Common myeloid progenitor, CD34-positive (primary cell): ENCODE measurements at regions of chr1 and their contacts with region 1.

Region 1: DNA sequence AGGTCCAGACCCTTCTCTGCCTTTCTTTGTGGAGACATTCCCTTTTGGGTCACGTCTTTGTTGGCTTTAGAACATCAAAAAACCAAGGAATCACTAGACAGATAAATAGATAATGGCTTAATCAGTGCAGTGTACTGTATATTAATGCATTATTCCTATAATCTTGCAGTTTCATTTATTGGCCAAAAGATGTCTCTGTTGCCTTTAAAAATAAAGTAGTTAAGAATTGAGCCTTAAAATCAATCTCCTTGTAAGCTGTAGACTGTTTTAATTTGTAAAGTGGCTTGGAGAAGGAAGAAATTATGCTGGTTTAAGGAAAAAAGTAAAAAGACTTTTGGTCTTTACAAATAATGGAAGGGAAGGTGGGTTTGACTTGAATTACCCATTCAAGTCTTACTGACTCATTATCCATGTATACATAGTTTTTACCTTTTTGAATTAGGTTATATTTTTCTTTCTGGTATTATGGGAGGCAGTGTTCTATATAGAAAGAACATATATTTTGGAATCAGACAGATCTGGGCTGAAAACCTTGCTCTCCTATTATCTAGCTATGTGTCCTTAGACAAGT is 84.6 kb downstream of the VPS13D start:
- DNase-seq: peak; percentile 21 to 55 (median 49)
- H3K4me3 ChIP-seq: no peak overlapping the region
- H3K27ac ChIP-seq: no peak overlapping the region
- H3K4me1 ChIP-seq: no peaks in the 10 kb centered on the region
- H3K27me3 ChIP-seq: no peaks in the 10 kb centered on the region

Region 2: DNA sequence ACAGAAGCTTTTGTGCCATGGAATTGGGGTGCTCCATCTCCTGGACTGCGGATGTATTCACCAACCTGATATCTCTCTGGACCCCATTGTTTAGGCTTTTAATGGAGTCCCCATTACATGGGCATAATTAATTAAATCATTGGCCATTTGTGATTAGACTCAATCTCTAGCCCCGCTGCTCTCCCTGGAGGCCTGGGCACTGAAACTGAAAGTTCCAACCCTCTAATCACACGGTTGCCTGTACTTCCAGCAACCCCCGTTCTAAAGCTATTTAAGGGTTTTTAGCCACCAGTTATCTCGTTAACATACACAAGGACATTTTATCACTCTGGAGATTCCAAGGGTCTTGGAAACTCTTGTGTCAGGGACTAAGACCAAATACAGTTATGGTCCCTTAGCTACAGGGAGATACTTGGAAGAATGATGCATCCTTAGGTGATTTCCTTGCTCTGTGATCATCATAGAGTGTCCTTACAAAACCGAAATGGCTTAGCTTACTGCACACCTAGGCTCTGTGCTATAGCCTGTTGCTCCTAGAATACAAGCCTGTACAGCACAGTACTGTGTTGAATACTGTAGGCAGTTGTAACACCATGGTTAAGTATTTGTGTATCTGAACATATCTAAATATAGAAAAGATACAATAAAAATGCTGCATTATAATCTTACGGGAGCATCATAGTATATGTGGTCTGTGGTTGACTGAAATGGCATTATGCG is 12.7 kb before region 1 on chr1:
- CTCF ChIA-PET with region 1: interaction called, 14 read pairs
- POLR2A ChIA-PET with region 1: no interaction called
- DNase-seq: no peak
- H3K4me3 ChIP-seq: no peak overlapping the region
- H3K27ac ChIP-seq: no peak overlapping the region
- H3K4me1 ChIP-seq: no peaks in the 10 kb centered on the region
- H3K27me3 ChIP-seq: no peaks in the 10 kb centered on the region

Region 3: GRCh38 chr1:12658531-12659453 is 344.4 kb after region 1 on chr1:
- CTCF ChIA-PET with region 1: interaction called, 86 read pairs
- POLR2A ChIA-PET with region 1: no interaction called
- DNase-seq: peak; percentile 62 to 72 (median 64)
- H3K4me3 ChIP-seq: no peak overlapping the region
- H3K27ac ChIP-seq: no peak overlapping the region
- H3K4me1 ChIP-seq: no peaks in the 10 kb centered on the region
- H3K27me3 ChIP-seq: peaks cover 0 to 7% (median 0%) of the 10 kb centered on the region in 5 experiments